Aorta (tissue), 5 donors: ENCODE measurements at regions of chr17 and their contacts with region 1.

Region 1: DNA sequence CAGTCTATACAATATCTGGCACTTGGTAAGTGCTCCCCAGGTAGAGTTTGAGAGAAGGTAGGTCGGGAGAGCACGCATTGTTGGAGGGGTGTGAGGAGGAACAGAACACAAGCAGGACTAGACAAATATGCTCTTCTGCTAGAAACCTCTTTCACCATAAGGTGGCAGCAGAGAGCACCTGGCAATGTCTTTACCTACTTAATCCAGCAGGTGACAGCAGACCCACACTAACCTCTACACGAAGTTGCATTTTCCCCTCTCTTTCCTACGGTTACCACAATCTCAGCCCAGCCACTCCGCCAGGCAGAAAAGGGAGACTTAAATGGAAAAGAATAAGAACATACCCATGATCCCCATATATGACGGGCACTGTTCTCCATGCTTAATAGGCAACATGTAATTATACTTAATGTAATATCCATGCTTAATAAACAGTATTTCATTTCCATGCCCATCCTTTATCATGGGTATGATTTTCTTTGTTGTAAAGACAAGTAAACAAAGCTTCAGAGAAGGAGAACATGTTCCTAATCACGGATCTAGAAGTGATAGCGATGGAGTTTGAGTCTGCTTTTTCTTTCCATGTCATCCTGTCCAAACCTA is 55.1 kb upstream of the CCL2 start:
- DNase-seq: peak; percentile 73 to 78
- ATAC-seq: peak; percentile 94
- H3K4me3 ChIP-seq: no peak overlapping the region
- H3K27ac ChIP-seq: no peak overlapping the region
- H3K4me1 ChIP-seq: no peaks in the 10 kb centered on the region
- H3K27me3 ChIP-seq: no peaks in the 10 kb centered on the region

Region 2: GRCh38 chr17:34241062-34241461 is 41.0 kb after region 1 on chr17:
- intact Hi-C with region 1: loop called (anchors 5 kb)
- DNase-seq: peak; percentile 79 to 88
- ATAC-seq: peak; percentile 70
- H3K4me3 ChIP-seq: no peak overlapping the region
- H3K27ac ChIP-seq: no peak overlapping the region
- H3K4me1 ChIP-seq: no peaks in the 10 kb centered on the region
- H3K27me3 ChIP-seq: no peaks in the 10 kb centered on the region

Region 3: GRCh38 chr17:34248511-34249024 is 48.5 kb after region 1 on chr17:
- intact Hi-C with region 1: loop called (anchors 5 kb)
- DNase-seq: no peak
- ATAC-seq: peak; percentile 57
- H3K4me3 ChIP-seq: no peak overlapping the region
- H3K27ac ChIP-seq: peak overlapping the region; percentile 91 to 97
- H3K4me1 ChIP-seq: peaks cover 16 to 35% of the 10 kb centered on the region in 2 donors
- H3K27me3 ChIP-seq: no peaks in the 10 kb centered on the region

Region 4: GRCh38 chr17:34259146-34259545 is 59.1 kb after region 1 on chr17:
- intact Hi-C with region 1: no loop called
- DNase-seq: no peak
- ATAC-seq: no peak
- H3K4me3 ChIP-seq: no peak overlapping the region
- H3K27ac ChIP-seq: peak overlapping the region in 1 of 2 donors; percentile 7
- H3K4me1 ChIP-seq: peaks cover 2 to 4% of the 10 kb centered on the region in 2 donors
- H3K27me3 ChIP-seq: no peaks in the 10 kb centered on the region

Region 5: DNA sequence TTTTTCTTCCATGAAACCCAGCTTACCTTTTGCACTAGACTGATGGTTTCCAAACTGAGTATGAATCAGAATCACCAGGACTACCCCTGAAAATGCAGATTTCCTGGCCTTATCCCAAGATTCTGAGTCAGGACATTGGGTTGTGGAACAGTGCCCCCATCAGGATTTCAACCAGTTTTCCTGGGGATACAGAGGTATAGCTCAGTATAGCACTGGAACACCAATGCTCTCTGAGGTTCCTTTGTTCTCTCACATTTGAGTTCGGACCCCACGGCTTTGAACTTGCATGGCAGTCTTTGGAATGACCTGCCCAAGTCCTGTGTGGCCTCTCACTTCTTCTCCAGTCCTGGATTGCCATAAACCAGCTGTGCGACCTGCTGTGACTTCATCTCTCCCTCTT is 106.4 kb after region 1 on chr17:
- intact Hi-C with region 1: loop called (anchors 2 to 5 kb)
- DNase-seq: no peak
- ATAC-seq: peak; percentile 82
- H3K4me3 ChIP-seq: no peak overlapping the region
- H3K27ac ChIP-seq: no peak overlapping the region
- H3K4me1 ChIP-seq: peaks cover 0 to 1% of the 10 kb centered on the region in 2 donors
- H3K27me3 ChIP-seq: no peaks in the 10 kb centered on the region

Region 6: GRCh38 chr17:34361478-34362061 is 161.5 kb after region 1 on chr17:
- intact Hi-C with region 1: loop called (anchors 1 kb)
- DNase-seq: peak; percentile 92 to 97
- ATAC-seq: peak; percentile 92
- H3K4me3 ChIP-seq: no peak overlapping the region
- H3K27ac ChIP-seq: no peak overlapping the region
- H3K4me1 ChIP-seq: no peaks in the 10 kb centered on the region
- H3K27me3 ChIP-seq: no peaks in the 10 kb centered on the region